KBM-7 (cell line): ENCODE measurements at regions of chrX and their contacts with region 1.

Region 1: DNA sequence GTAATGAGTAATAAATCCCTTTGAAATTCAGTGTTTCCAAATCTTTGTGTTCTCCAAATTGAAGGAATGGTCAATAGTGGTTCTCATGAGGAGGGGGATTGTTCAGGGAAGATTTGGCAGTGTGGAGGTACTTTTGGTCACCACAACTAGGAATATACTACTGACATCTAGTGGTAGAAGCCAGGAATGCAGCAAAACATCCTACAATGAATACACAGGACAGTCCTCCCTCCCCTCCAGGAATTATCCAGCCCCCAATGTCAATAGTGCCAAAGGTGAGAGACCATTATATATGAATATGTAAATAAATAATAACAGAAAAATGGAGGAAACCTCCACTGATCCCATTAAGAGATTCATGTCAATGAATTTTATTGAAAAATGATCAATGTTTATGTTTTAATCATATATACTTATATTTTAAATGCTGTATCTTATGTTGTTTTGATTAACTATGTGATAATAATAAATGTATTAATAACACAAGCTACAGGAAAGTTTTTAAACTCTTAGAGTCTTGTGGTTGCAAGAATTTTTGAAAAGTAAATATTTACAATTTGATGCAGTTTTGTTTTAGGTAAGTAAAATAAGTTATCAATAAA is 14.4 kb upstream of the FAM9A start:
- DNase-seq: peak; percentile 73

Region 2: DNA sequence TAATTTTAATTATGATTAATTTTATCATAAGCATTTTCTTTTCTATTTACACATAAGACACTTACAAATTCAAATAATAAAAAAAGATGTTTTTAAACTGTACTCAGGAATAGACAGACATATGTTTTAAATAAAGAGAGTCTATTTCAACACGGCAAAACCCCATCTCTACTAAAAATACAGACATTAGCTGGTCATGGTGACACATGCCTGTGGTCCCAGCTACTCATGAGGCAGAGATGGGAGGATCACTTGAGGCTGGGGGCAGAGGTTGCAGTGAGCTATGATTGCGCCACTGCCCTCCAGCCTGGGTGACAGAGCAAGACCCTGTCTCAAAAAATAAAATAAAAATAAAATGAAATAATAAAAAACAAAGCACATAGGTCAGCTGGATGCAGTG is 203.6 kb after region 1 on chrX:
- in situ Hi-C with region 1: no loop called
- DNase-seq: no peak

Region 3: DNA sequence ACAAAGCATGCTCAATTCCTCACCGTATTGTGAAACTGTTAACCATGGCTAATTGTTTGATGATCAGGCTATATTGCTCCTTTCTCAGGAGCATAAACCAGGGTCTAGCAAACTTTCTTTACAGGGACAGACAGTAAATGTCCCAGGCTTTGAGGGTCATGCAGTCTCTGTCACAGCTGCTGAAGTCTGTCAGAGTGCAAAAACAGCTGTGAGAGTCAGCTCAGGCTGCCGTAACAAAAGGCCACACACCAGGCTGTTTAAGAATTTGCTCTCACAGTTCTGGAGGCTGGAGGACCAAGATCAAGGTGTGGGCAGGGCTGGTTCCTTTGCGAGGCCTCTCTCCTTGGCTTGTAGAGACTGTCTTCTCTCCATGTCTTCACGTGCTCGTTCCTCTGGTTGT is 874.5 kb after region 1 on chrX:
- in situ Hi-C with region 1: no loop called
- DNase-seq: no peak

Region 4: GRCh38 chrX:9708904-9709553 is 893.5 kb after region 1 on chrX:
- in situ Hi-C with region 1: loop called (anchors 25 kb)
- DNase-seq: peak; percentile 94